Endothelial cell of umbilical vein (primary cell): ENCODE measurements at regions of chr4 and their contacts with region 1.

Region 1: GRCh38 chr4:30714408-30715027 is 5.7 kb upstream of the PCDH7 start:
- DNase-seq: peak; percentile 65
- H3K4me3 ChIP-seq: no peak overlapping the region
- H3K27ac ChIP-seq: no peak overlapping the region
- H3K4me1 ChIP-seq: peaks cover 13% of the 10 kb centered on the region
- H3K27me3 ChIP-seq: no peaks in the 10 kb centered on the region
- CTCF ChIP-seq: peak; percentile 79
- POLR2A ChIP-seq: no peak

Region 2: DNA sequence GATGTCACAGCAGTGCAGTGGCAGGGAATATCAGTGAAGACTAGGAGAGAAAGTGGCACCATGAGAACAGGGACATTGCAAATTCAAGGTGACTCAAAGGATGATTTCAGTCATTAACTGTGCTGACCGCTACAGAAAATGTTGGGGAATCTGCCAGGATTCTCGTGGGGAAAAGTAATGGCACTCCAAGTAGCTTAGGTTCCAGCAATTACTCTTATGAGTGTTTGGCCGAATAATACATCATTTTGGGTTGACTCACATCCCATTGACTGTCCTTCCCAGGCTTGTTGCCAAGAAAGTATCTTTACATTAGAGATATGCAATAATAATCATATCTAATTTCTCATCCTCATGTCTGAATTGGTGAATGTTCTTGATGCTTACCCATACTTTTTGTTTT is 1405.5 kb before region 1 on chr4:
- CTCF ChIA-PET with region 1: no interaction called
- POLR2A ChIA-PET with region 1: no interaction called
- dilution Hi-C with region 1: no loop called
- intact Hi-C with region 1: no loop called
- DNase-seq: peak; percentile 70
- H3K4me3 ChIP-seq: no peak overlapping the region
- H3K27ac ChIP-seq: peak overlapping the region; percentile 78
- H3K4me1 ChIP-seq: peaks cover 45% of the 10 kb centered on the region
- H3K27me3 ChIP-seq: no peaks in the 10 kb centered on the region
- CTCF ChIP-seq: no peak
- POLR2A ChIP-seq: no peak

Region 3: DNA sequence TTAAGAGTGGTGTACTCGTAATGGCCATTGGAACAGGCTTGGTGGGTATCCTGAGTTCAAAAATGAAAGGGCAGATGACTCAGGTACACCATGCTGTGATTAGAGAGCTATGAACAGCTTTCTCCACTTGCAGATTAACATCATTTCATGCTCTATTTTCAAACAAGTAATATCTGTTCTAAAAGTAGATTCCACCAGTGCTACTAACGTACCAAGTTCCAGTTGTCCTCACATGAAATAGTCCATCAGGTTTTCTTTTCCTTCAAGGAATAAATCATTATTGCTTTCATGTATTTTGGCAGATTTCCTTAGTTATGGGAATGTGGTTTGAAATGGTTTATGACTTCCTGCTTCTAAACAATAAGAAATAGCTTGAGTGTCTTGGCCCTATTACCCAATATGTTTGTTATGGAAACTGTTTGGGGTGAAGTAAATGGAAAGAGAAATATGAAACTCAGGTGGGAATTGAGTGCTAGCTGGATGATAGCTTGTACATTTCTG is 55.6 kb after region 1 on chr4:
- CTCF ChIA-PET with region 1: interaction called, 29 read pairs
- POLR2A ChIA-PET with region 1: no interaction called
- dilution Hi-C with region 1: no loop called
- intact Hi-C with region 1: no loop called
- DNase-seq: peak; percentile 93
- H3K4me3 ChIP-seq: no peak overlapping the region
- H3K27ac ChIP-seq: peak overlapping the region; percentile 60
- H3K4me1 ChIP-seq: peaks cover 59% of the 10 kb centered on the region
- H3K27me3 ChIP-seq: no peaks in the 10 kb centered on the region
- CTCF ChIP-seq: no peak
- POLR2A ChIP-seq: peak; percentile 21

Region 4: DNA sequence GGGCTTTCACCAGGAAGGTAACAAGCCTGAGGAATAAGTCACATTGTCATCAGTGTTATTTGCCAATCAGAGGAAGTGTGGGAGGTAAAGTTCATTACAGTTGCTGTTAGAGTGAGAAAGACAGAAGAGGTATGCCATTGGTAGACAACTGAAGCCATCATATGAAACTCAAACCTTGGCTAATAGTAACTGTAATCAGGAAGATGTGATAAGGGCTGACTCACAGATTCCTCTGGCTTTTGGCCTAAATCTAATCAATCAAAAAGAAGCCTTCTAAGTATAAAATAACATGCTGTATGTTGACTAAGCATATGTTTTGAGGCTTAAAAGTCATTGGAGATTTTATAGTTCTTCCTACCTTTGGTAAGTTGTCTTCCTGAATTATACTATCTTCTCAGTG is 248.4 kb after region 1 on chr4:
- CTCF ChIA-PET with region 1: no interaction called
- POLR2A ChIA-PET with region 1: no interaction called
- dilution Hi-C with region 1: no loop called
- intact Hi-C with region 1: loop called (anchors 5 kb)
- DNase-seq: peak; percentile 93
- H3K4me3 ChIP-seq: no peak overlapping the region
- H3K27ac ChIP-seq: no peak overlapping the region
- H3K4me1 ChIP-seq: peaks cover 6% of the 10 kb centered on the region
- H3K27me3 ChIP-seq: no peaks in the 10 kb centered on the region
- CTCF ChIP-seq: no peak
- POLR2A ChIP-seq: no peak

Region 5: DNA sequence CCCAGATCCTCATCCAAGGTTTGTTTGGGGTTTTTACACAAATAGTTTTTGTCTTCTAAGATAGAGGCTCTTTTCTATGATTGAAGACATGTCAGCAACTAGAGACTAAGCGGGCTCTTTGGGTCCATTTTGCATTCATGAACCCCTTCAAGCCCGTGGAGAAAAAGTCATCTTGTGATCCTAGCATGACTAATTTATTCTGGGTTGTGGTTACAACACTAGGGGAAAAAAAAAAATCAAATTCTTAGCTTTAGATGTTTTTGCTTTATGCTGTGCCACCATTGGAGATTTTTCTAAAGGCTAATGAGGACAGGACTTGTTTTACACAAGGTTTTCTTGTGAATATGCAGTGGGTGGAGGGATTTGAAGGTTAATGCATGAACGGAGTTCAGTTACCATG is 445.6 kb after region 1 on chr4:
- CTCF ChIA-PET with region 1: no interaction called
- POLR2A ChIA-PET with region 1: no interaction called
- dilution Hi-C with region 1: no loop called
- intact Hi-C with region 1: loop called (anchors 10 kb)
- DNase-seq: no peak
- H3K4me3 ChIP-seq: no peak overlapping the region
- H3K27ac ChIP-seq: no peak overlapping the region
- H3K4me1 ChIP-seq: no peaks in the 10 kb centered on the region
- H3K27me3 ChIP-seq: no peaks in the 10 kb centered on the region
- CTCF ChIP-seq: no peak
- POLR2A ChIP-seq: no peak

Region 6: DNA sequence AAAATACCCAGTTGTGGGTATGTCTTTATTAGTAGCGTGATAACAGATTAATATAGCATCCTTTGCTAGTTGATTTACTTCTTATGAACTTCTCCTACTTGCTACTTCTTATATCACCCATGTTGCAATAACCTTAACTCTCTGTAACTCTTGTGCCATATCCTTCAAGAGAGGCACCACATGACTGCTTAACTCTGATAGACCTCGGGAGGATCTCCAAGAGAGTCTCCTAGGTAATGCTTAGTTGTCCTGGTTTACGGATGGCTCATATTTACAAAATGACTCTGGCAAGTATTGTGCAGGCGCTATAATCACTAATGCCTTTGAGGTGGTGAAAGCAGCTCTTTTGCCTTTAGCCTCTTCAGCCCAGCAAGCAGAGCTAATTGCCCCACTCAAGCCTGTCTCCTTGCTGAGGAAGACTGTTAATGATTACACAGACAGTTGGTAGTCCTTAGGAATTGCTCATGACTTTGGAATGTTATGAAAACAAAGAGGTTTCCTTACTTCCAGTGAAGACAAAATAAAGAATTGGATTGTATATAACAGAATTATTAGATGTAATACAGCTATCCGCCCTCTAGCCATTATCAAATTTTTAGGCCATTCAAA is 1311.4 kb after region 1 on chr4:
- CTCF ChIA-PET with region 1: no interaction called
- POLR2A ChIA-PET with region 1: no interaction called
- dilution Hi-C with region 1: no loop called
- intact Hi-C with region 1: loop called (anchors 10 kb)
- DNase-seq: peak; percentile 43
- H3K4me3 ChIP-seq: no peak overlapping the region
- H3K27ac ChIP-seq: peak overlapping the region; percentile 22
- H3K4me1 ChIP-seq: peaks cover 10% of the 10 kb centered on the region
- H3K27me3 ChIP-seq: no peaks in the 10 kb centered on the region
- CTCF ChIP-seq: no peak
- POLR2A ChIP-seq: no peak